Naive thymus-derived CD4-positive, alpha-beta T cell (primary cell): ENCODE measurements at regions of chr3 and their contacts with region 1.

Region 1: DNA sequence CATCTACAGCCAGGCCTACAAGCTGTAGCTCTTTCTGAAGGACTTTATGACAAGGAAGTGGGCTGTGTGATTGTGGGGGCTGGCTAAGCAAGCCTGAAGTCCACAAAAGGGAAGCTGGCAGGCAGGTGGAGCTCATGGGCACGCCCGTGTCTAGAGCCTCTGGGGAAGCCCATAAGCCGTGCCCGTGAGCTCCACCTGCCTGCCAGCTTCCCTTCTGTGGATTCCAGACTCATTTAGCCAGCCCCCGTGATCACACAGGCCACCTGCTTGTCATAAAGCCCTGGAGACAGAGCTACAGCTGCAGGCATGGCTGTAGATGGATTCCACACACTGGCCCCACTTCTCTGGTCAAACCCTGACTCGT is 15.2 kb downstream of the EFCC1 start:
- DNase-seq: peak in 7 of 9 donors; percentile 54 to 71 (median 65)
- ATAC-seq: peak; percentile 85
- H3K4me3 ChIP-seq: peak overlapping the region; percentile 41
- H3K4me3 Mint-ChIP-seq: peak overlapping the region; percentile 68 to 87 (median 84)
- H3K27ac ChIP-seq: peak overlapping the region; percentile 75
- H3K27ac Mint-ChIP-seq: peak overlapping the region; percentile 90 to 100 (median 97)
- H3K4me1 ChIP-seq: peaks cover 26 to 33% of the 10 kb centered on the region in 2 donors
- H3K4me1 Mint-ChIP-seq: peaks cover 31 to 66% (median 48%) of the 10 kb centered on the region in 7 donors
- H3K27me3 ChIP-seq: no peaks in the 10 kb centered on the region
- H3K27me3 Mint-ChIP-seq: no peaks in the 10 kb centered on the region

Region 2: DNA sequence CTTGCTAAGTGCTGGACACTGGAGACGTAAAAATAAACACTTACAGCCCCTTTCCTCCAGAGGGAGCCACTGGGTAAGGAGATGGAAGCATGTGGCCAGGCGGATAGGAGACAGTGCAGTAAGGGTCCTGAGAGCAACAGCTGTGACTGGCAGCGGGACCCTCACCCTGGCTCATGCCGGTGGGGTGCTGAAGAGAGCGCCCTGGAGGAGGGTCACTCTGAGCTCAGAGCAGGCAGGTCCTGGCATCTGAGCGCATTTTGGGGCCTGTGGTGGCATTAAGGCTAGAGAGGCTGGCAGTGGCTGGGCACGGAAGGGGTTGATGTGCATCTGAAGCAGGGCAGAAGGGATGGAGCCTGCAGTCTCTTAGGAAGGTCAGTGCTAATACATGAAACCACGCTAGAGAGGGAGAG is 948.1 kb before region 1 on chr3:
- CTCF ChIA-PET with region 1: no interaction called
- POLR2A ChIA-PET with region 1: no interaction called
- intact Hi-C with region 1: no loop called
- DNase-seq: peak in 7 of 9 donors; percentile 16 to 48 (median 40)
- ATAC-seq: peak; percentile 74
- H3K4me3 ChIP-seq: no peak overlapping the region
- H3K4me3 Mint-ChIP-seq: no peak overlapping the region
- H3K27ac ChIP-seq: no peak overlapping the region
- H3K27ac Mint-ChIP-seq: peak overlapping the region in 6 of 9 donors; percentile 19 to 82 (median 60)
- H3K4me1 ChIP-seq: no peaks in the 10 kb centered on the region
- H3K4me1 Mint-ChIP-seq: peaks cover 0 to 5% (median 0%) of the 10 kb centered on the region in 7 donors
- H3K27me3 ChIP-seq: no peaks in the 10 kb centered on the region
- H3K27me3 Mint-ChIP-seq: no peaks in the 10 kb centered on the region

Region 3: GRCh38 chr3:128993461-128994173 is 22.7 kb before region 1 on chr3 and contains the start of gene CFAP92:
- CTCF ChIA-PET with region 1: interaction called, 36 read pairs
- POLR2A ChIA-PET with region 1: interaction called, 236 read pairs
- intact Hi-C with region 1: loop called (anchors 1 to 2 kb)
- DNase-seq: peak; percentile 84 to 90 (median 89)
- ATAC-seq: peak; percentile 99
- H3K4me3 ChIP-seq: peak within 1 kb of the TSS; percentile 57
- H3K4me3 Mint-ChIP-seq: peak within 1 kb of the TSS; percentile 71 to 87 (median 82)
- H3K27ac ChIP-seq: peak within 1 kb of the TSS; percentile 61
- H3K27ac Mint-ChIP-seq: peak within 1 kb of the TSS; percentile 56 to 91 (median 73)
- H3K4me1 ChIP-seq: peaks cover 6 to 28% of the 10 kb centered on the region in 2 donors
- H3K4me1 Mint-ChIP-seq: peaks cover 15 to 45% (median 34%) of the 10 kb centered on the region in 7 donors
- H3K27me3 ChIP-seq: no peaks in the 10 kb centered on the region
- H3K27me3 Mint-ChIP-seq: peaks cover 0 to 3% (median 0%) of the 10 kb centered on the region in 5 donors
- total RNA-seq, gene CFAP92: 0.10 to 1.4 (median 0.46) TPM

Region 4: GRCh38 chr3:129003578-129004160 is 12.7 kb before region 1 on chr3:
- CTCF ChIA-PET with region 1: interaction called, 117 read pairs
- POLR2A ChIA-PET with region 1: interaction called, 236 read pairs
- intact Hi-C with region 1: loop called in 1 of 2 experiments (anchors 1 kb)
- DNase-seq: peak; percentile 46 to 70 (median 62)
- ATAC-seq: peak; percentile 94
- H3K4me3 ChIP-seq: no peak overlapping the region
- H3K4me3 Mint-ChIP-seq: peak overlapping the region; percentile 55 to 84 (median 72)
- H3K27ac ChIP-seq: no peak overlapping the region
- H3K27ac Mint-ChIP-seq: peak overlapping the region in 3 of 9 donors; percentile 19 to 72 (median 68)
- H3K4me1 ChIP-seq: peaks cover 5 to 33% of the 10 kb centered on the region in 2 donors
- H3K4me1 Mint-ChIP-seq: peaks cover 29 to 62% (median 52%) of the 10 kb centered on the region in 7 donors
- H3K27me3 ChIP-seq: peaks cover 5 to 8% of the 10 kb centered on the region in 2 donors
- H3K27me3 Mint-ChIP-seq: peaks cover 13 to 61% (median 24%) of the 10 kb centered on the region in 5 donors

Region 5: DNA sequence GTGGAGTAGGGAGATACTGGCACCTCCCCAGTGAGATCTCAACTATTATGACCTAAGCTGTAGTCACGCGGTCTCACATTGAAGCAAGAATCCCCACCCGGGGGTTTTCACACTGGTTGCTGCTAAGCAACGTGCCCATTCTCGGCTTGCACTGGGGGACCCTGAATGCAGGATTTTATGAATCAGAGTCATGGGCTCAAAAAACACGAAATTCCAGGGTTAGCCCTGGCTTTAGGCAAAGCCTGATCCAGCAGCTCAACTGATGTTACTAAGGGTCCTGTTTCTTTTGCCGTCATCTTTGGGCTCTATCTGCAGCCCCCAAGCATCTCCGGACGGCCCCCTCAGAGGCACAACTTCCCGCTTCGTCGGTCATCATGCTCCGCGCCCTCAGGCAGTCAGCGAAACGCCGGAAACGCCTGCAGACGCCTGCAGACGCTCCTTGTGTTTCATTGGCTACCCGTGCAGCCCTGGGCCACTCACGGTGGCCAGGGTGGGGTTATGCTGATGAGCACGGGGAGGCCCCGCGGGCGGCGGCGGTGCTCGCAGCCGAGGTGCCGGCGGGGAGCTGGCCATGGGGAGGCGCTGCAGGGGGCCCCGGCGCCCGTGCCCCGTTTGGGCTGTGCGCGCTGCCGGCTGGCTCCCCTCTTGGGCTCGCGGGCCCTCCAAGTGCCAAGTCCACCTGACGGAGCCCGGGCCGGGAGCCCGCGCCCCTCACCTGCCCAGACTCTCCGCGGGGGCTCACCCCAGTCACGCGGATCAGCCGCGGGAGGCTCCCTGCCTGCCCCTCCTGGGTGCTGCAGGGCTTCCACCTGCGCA is 10.6 kb after region 1 on chr3:
- CTCF ChIA-PET with region 1: interaction called, 74 read pairs
- POLR2A ChIA-PET with region 1: interaction called, 95 read pairs
- intact Hi-C with region 1: loop called (anchors 1 kb)
- DNase-seq: peak; percentile 84 to 94 (median 93)
- ATAC-seq: peak; percentile 99
- H3K4me3 ChIP-seq: peak overlapping the region; percentile 67
- H3K4me3 Mint-ChIP-seq: peak overlapping the region; percentile 69 to 88 (median 86)
- H3K27ac ChIP-seq: peak overlapping the region; percentile 74
- H3K27ac Mint-ChIP-seq: peak overlapping the region; percentile 82 to 97 (median 93)
- H3K4me1 ChIP-seq: peaks cover 8 to 11% of the 10 kb centered on the region in 2 donors
- H3K4me1 Mint-ChIP-seq: peaks cover 13 to 31% (median 25%) of the 10 kb centered on the region in 7 donors
- H3K27me3 ChIP-seq: no peaks in the 10 kb centered on the region
- H3K27me3 Mint-ChIP-seq: peaks cover 0 to 3% (median 0%) of the 10 kb centered on the region in 5 donors

Region 6: DNA sequence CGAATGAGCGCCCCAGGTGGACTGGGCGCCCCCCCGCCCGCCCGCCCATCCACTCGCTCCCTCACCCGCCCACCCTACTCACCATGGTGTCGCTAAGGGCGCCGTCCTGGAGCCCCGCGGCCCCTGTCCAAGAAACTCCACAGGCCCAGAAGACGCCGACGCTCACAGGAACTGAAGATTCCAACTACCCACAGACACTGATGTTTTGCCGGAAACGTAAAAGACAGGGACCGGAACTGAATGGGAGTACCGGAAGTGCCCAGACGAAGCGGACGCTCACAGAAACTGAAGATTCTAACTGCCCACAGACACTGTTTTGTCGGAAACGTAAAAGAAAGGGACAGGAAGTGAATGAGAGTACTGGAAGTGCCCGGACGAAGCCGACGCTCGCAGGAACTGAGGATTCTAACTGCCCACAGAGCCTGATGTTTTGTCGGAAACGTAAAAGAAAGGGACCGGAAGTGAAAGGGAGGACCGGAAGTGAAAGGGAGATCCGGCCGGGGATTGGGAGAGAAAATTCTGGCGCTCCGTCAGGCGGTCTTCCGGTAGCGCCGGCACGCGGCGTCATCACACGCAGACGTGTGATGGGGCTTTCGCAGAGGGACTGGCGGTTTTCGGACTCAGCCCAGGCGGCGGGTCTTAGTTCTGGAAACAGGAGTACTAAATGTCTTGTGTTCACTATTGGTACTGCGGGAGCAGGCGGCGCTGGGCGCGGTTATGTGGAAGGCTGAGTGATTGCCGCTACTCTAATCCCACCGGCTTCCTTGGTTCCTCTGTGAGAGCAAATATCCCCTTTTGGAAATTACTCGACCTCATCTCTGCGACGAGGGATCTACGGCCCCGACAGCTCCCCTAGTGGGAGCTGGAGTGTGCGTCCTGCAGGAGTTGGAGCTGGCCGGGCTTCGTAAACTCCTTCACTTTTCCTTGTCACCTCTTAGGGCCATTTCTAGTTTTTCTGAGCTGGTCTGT is 144.8 kb after region 1 on chr3 and contains the start of gene ISY1:
- CTCF ChIA-PET with region 1: interaction called, 3 read pairs
- POLR2A ChIA-PET with region 1: interaction called, 12 read pairs
- intact Hi-C with region 1: no loop called
- DNase-seq: peak; percentile 68 to 92 (median 89)
- ATAC-seq: peak; percentile 90
- H3K4me3 ChIP-seq: peak within 1 kb of the TSS; percentile 94
- H3K4me3 Mint-ChIP-seq: peak within 1 kb of the TSS; percentile 84 to 100 (median 98)
- H3K27ac ChIP-seq: peak within 1 kb of the TSS; percentile 98
- H3K27ac Mint-ChIP-seq: peak within 1 kb of the TSS; percentile 97 to 100 (median 99)
- H3K4me1 ChIP-seq: peaks cover 22 to 24% of the 10 kb centered on the region in 2 donors
- H3K4me1 Mint-ChIP-seq: peaks cover 18 to 53% (median 40%) of the 10 kb centered on the region in 7 donors
- H3K27me3 ChIP-seq: no peaks in the 10 kb centered on the region
- H3K27me3 Mint-ChIP-seq: peaks cover 0 to 4% (median 0%) of the 10 kb centered on the region in 5 donors
- total RNA-seq, gene ISY1: 27.6 to 65.1 (median 37.4) TPM